Upper lobe of right lung (tissue), 1 donor: ENCODE measurements at regions of chr10 and their contacts with region 1.

Region 1: GRCh38 chr10:96229568-96230030 is 41.8 kb downstream of the BLNK start:
- DNase-seq: peak; percentile 90
- ATAC-seq: peak; percentile 98
- H3K4me3 ChIP-seq: no peak overlapping the region
- H3K27ac ChIP-seq: no peak overlapping the region
- H3K4me1 ChIP-seq: no peaks in the 10 kb centered on the region
- H3K27me3 ChIP-seq: no peaks in the 10 kb centered on the region
- CTCF ChIP-seq: peak; percentile 69

Region 2: GRCh38 chr10:96271016-96271829 is 41.6 kb after region 1 on chr10 and contains the start of gene BLNK:
- intact Hi-C with region 1: no loop called
- DNase-seq: peak; percentile 85
- ATAC-seq: peak; percentile 95
- H3K4me3 ChIP-seq: peak within 1 kb of the TSS; percentile 41
- H3K27ac ChIP-seq: peak within 1 kb of the TSS; percentile 83
- H3K4me1 ChIP-seq: peaks cover 36% of the 10 kb centered on the region
- H3K27me3 ChIP-seq: no peaks in the 10 kb centered on the region
- CTCF ChIP-seq: no peak
- total RNA-seq, gene BLNK: 8.8 TPM

Region 3: GRCh38 chr10:96299383-96299782 is 69.8 kb after region 1 on chr10:
- intact Hi-C with region 1: loop called (anchors 5 kb)
- DNase-seq: no peak
- ATAC-seq: no peak
- H3K4me3 ChIP-seq: no peak overlapping the region
- H3K27ac ChIP-seq: no peak overlapping the region
- H3K4me1 ChIP-seq: peaks cover 3% of the 10 kb centered on the region
- H3K27me3 ChIP-seq: no peaks in the 10 kb centered on the region
- CTCF ChIP-seq: no peak